ENCODE measurements at regions of chr6 and their contacts with region 1.

Region 1: DNA sequence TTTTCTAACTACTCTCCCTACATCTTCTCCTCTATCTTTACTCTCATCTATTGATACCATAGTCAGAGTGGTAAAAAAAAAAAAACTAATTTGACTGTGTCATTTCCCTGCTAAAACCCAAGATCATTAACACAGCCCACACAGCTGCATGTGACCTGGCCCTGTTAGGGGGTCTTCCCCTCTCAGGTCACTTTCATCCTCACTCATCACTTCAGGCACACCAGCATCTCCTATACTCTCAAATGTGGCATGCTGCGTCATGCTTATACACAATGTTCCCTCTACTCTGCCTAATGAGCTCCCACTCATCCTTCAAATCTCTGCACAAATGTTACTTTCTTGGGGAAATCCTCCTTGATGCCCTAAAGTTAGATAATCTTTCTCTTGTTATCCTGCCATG is 86.8 kb downstream of the CDK19 start:
- DNase-seq: no peak
- ATAC-seq: no peak
- H3K4me3 ChIP-seq: no peak overlapping the region
- H3K27ac ChIP-seq: no peak overlapping the region
- H3K4me1 ChIP-seq: no peaks in the 10 kb centered on the region
- H3K27me3 ChIP-seq: no peaks in the 10 kb centered on the region
- CTCF ChIP-seq: no peak

Region 2: DNA sequence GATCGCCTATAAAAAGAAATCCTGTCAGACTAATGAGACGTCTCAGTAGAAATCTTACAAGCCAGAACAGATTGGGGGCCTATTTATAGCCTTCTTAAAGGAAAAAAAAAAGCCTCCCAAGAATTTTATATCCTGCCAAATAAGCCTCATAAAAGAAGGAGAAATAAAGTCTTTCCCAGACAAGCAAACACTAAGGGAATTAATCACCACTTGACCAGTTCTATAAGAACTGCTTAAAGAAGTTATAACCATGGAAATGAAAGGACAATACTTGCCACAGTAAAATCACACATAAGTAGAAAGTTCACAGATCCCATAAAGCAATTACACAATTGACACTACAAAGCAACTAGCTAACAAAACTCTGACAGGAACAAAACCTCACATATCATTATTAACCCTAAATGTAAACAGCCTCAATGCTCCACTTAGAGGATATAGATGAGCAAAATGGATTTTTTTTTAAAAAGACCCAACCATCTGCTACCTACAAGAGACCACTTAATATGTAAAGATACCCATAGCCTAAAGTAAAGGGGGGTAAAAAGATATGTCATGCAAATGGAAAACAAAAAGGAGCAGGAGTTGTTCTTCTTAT is 265.5 kb before region 1 on chr6:
- CTCF ChIA-PET with region 1: interaction called, 17 read pairs
- POLR2A ChIA-PET with region 1: no interaction called
- in situ Hi-C with region 1: no loop called
- intact Hi-C with region 1: no loop called
- DNase-seq: no peak
- ATAC-seq: no peak
- H3K4me3 ChIP-seq: no peak overlapping the region
- H3K27ac ChIP-seq: no peak overlapping the region
- H3K4me1 ChIP-seq: no peaks in the 10 kb centered on the region
- H3K27me3 ChIP-seq: peaks cover 2% of the 10 kb centered on the region; the same call in 1 of the 2 replicates
- CTCF ChIP-seq: no peak